MCF 10A (cell line): ENCODE measurements at regions of chr6 and their contacts with region 1.

Region 1: GRCh38 chr6:70706491-70707123 is 38.9 kb downstream of the SMAP1 start:
- DNase-seq: peak; percentile 61
- H3K4me3 Mint-ChIP-seq: no peak overlapping the region
- H3K27ac Mint-ChIP-seq: no peak overlapping the region
- H3K4me1 Mint-ChIP-seq: peaks cover 6% of the 10 kb centered on the region
- H3K27me3 Mint-ChIP-seq: no peaks in the 10 kb centered on the region
- CTCF ChIP-seq: peak; percentile 36

Region 2: DNA sequence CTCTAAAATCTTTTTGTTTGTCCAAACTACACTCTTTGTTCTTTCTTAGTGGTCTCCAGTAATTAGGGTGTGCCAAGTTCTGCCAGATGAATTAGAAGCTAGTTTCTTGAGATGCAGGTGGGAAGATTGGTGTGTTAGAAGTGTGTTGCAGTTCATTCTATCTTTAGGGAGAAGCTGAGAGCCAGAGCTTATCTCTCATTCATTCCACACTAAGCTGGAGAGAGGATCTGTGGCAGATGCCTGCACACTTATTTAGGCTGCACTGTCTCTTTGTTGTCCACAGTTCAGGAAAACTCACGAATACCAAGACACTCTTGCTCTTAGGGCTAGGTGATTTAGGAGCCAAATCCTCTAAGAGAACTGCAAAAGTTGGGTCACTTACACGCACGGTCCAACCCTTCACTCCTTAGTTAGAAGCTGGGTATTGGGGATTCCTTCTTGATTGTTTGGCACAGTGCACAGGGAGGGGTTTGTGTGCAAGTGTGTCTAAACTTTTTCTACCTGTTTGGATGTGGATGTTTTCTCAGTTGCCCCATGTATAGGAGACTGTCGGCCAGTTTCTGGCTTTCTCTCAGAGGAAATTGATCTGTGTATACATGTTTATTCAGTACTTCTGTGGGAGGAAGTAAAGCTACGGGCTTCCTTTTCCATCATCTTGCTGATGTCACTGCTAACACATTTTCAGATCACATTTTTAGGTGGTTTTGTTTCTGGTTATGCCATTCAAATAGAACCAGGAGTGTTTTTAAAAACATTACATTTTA is 10.6 kb after region 1 on chr6:
- CTCF ChIA-PET with region 1: interaction called, 13 read pairs
- POLR2A ChIA-PET with region 1: no interaction called
- intact Hi-C with region 1: no loop called
- DNase-seq: no peak
- H3K4me3 Mint-ChIP-seq: no peak overlapping the region
- H3K27ac Mint-ChIP-seq: no peak overlapping the region
- H3K4me1 Mint-ChIP-seq: no peaks in the 10 kb centered on the region
- H3K27me3 Mint-ChIP-seq: no peaks in the 10 kb centered on the region
- CTCF ChIP-seq: no peak

Region 3: GRCh38 chr6:70863343-70863742 is 156.7 kb after region 1 on chr6:
- CTCF ChIA-PET with region 1: interaction called, 12 read pairs
- POLR2A ChIA-PET with region 1: no interaction called
- intact Hi-C with region 1: no loop called
- DNase-seq: no peak
- H3K4me3 Mint-ChIP-seq: no peak overlapping the region
- H3K27ac Mint-ChIP-seq: no peak overlapping the region
- H3K4me1 Mint-ChIP-seq: no peaks in the 10 kb centered on the region
- H3K27me3 Mint-ChIP-seq: peaks cover 17% of the 10 kb centered on the region
- CTCF ChIP-seq: no peak

Region 4: DNA sequence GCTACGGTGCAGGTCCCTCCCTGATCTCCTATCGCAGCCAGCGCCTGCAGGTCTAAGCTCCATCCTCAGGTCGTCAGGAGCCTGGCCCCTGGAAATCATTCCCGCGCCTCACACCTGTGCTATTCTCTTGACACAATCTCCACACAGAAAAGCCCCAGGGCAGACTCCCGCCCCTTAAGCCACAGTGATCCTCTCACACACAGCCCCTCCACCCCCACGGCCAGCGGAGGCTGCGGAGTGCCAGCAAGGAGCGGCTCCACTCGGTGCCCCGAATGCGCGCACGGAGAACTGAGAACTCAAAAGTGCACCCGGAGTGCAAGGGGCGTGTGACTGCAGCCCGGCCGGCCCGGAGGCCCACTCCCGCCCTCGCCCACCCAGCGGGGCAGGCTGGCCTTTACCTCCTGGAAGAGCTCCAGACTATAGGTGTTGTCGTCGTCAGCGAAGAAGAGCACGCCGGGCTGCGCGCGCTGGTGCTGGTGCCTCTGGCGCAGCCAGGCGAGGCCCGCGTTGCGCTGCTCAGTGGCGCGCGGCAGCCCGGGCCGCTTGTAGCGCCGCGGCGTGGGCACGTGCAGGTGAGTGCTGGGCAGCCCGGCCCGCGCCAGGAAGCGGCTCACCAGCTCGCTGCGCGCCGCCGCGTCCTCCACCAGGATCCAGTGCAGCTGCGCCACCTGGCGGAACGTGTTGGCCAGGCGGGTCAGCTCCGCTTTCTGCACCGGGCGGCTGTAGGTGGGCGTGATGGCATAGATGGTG is 249.0 kb after region 1 on chr6:
- CTCF ChIA-PET with region 1: interaction called, 32 read pairs
- POLR2A ChIA-PET with region 1: no interaction called
- intact Hi-C with region 1: loop called (anchors 1 kb)
- DNase-seq: peak; percentile 79
- H3K4me3 Mint-ChIP-seq: peak overlapping the region; percentile 67
- H3K27ac Mint-ChIP-seq: no peak overlapping the region
- H3K4me1 Mint-ChIP-seq: no peaks in the 10 kb centered on the region
- H3K27me3 Mint-ChIP-seq: peaks cover 96% of the 10 kb centered on the region
- CTCF ChIP-seq: peak; percentile 86